ENCODE measurements at regions of chr7 and their contacts with region 1.

Region 1: DNA sequence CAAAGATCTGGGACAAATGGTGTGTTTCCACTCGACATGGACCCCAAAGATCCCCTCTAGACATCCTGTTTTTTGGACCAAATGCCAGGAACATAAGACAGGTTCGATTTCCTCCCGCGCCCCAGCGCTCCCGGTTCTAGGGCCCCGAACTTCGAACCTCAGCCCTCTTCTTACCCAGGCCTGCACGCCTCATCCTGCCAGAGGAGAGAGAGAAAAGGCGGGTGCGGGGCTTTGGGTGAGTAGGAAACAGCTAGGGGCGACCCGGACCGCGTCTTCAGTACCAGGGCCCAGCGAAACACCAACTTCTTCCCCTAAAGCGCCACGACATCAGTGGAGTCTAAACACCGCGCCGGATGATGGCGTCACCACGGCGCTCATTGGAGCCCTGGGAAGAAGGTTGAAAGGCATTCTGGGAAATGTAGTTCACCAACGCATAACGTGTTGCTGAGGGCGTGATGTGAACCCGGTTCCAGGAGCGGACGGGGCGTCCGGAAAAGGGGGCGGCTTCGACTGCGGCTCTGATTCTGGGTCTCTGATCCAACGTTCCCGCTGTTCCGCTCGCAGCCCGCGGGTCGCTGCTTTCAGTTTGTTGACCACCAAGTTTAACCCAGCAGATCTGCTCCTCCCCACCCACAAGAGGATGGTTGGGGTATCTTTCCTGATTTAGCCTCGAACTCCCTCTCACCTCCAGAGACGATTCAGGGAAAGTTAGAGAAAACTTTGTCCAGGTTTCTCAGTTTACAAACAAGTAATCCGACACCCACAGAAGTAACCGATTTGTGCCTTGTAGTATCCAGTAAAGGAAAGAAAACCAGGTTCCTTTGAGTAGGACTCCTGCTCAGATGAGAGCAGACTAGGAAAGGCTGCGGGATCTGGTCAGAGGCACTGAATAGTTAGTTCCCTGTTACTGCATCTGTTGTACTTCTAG is at the start of gene BET1:
- DNase-seq: peak; percentile 84 to 98 (median 90)
- ATAC-seq: peak; percentile 95
- H3K4me3 ChIP-seq: peak within 1 kb of the TSS; percentile 75
- H3K4me3 Mint-ChIP-seq: peak within 1 kb of the TSS; percentile 99
- H3K27ac ChIP-seq: peak within 1 kb of the TSS; percentile 76 to 78
- H3K27ac Mint-ChIP-seq: peak within 1 kb of the TSS; percentile 99
- H3K4me1 ChIP-seq: peaks cover 14% of the 10 kb centered on the region
- H3K4me1 Mint-ChIP-seq: peaks cover 53% of the 10 kb centered on the region
- H3K27me3 ChIP-seq: no peaks in the 10 kb centered on the region
- H3K27me3 Mint-ChIP-seq: peaks cover 18% of the 10 kb centered on the region
- CTCF ChIP-seq: no peak
- total RNA-seq, gene BET1: 7.4 to 9.5 TPM

Region 2: GRCh38 chr7:92456236-92456635 is 1548.1 kb before region 1 on chr7:
- CTCF ChIA-PET with region 1: no interaction called
- POLR2A ChIA-PET with region 1: no interaction called
- intact Hi-C with region 1: loop called in 1 of 2 experiments (anchors 10 kb)
- DNase-seq: no peak
- ATAC-seq: no peak
- H3K4me3 ChIP-seq: no peak overlapping the region
- H3K4me3 Mint-ChIP-seq: no peak overlapping the region
- H3K27ac ChIP-seq: no peak overlapping the region
- H3K27ac Mint-ChIP-seq: no peak overlapping the region
- H3K4me1 ChIP-seq: no peaks in the 10 kb centered on the region
- H3K4me1 Mint-ChIP-seq: no peaks in the 10 kb centered on the region
- H3K27me3 ChIP-seq: no peaks in the 10 kb centered on the region
- H3K27me3 Mint-ChIP-seq: no peaks in the 10 kb centered on the region
- CTCF ChIP-seq: no peak

Region 3: DNA sequence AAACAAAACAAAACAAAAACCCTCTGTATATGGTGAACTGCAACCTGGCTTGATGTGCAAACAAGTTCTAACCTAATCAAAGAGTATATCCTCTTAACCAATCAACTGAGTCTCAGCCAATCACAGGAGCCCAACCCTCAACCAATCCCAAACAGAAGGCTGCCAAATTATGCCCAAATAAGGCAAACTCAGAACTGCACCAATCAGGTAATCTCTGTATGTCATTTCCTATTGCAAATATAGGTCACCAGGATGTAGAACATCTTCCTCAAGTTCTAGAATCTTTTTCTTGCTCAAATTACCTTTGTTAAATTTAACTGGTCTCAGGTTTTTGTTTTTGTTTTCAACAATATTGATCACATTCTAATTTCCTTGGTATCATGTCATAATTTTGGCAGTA is 1419.3 kb before region 1 on chr7:
- CTCF ChIA-PET with region 1: no interaction called
- POLR2A ChIA-PET with region 1: no interaction called
- intact Hi-C with region 1: loop called in 1 of 2 experiments (anchors 5 kb)
- DNase-seq: peak in 4 of 14 experiments; percentile 6 to 50 (median 46)
- ATAC-seq: peak; percentile 33
- H3K4me3 ChIP-seq: no peak overlapping the region
- H3K4me3 Mint-ChIP-seq: peak overlapping the region; percentile 48
- H3K27ac ChIP-seq: no peak overlapping the region
- H3K27ac Mint-ChIP-seq: peak overlapping the region; percentile 70
- H3K4me1 ChIP-seq: peaks cover 26% of the 10 kb centered on the region
- H3K4me1 Mint-ChIP-seq: peaks cover 71% of the 10 kb centered on the region
- H3K27me3 ChIP-seq: no peaks in the 10 kb centered on the region
- H3K27me3 Mint-ChIP-seq: no peaks in the 10 kb centered on the region
- CTCF ChIP-seq: no peak

Region 4: GRCh38 chr7:94509879-94510581 is 505.7 kb after region 1 on chr7:
- CTCF ChIA-PET with region 1: no interaction called
- POLR2A ChIA-PET with region 1: no interaction called
- intact Hi-C with region 1: loop called in 1 of 2 experiments (anchors 5 kb)
- DNase-seq: peak; percentile 43 to 87 (median 60)
- ATAC-seq: peak; percentile 81
- H3K4me3 ChIP-seq: peak overlapping the region; percentile 70
- H3K4me3 Mint-ChIP-seq: peak overlapping the region; percentile 92
- H3K27ac ChIP-seq: peak overlapping the region; percentile 70 to 73
- H3K27ac Mint-ChIP-seq: no peak overlapping the region
- H3K4me1 ChIP-seq: peaks cover 29% of the 10 kb centered on the region
- H3K4me1 Mint-ChIP-seq: peaks cover 49% of the 10 kb centered on the region
- H3K27me3 ChIP-seq: no peaks in the 10 kb centered on the region
- H3K27me3 Mint-ChIP-seq: no peaks in the 10 kb centered on the region
- CTCF ChIP-seq: peak; percentile 13

Region 5: GRCh38 chr7:94657771-94658693 is 653.7 kb after region 1 on chr7:
- CTCF ChIA-PET with region 1: no interaction called
- POLR2A ChIA-PET with region 1: no interaction called
- intact Hi-C with region 1: loop called in 1 of 2 experiments (anchors 10 kb)
- DNase-seq: peak; percentile 91 to 97 (median 94)
- ATAC-seq: peak; percentile 79
- H3K4me3 ChIP-seq: peak overlapping the region; percentile 63
- H3K4me3 Mint-ChIP-seq: peak overlapping the region; percentile 86
- H3K27ac ChIP-seq: no peak overlapping the region
- H3K27ac Mint-ChIP-seq: peak overlapping the region; percentile 63
- H3K4me1 ChIP-seq: peaks cover 29% of the 10 kb centered on the region
- H3K4me1 Mint-ChIP-seq: peaks cover 21% of the 10 kb centered on the region
- H3K27me3 ChIP-seq: peaks cover 15 to 26% of the 10 kb centered on the region in 2 experiments
- H3K27me3 Mint-ChIP-seq: peaks cover 34% of the 10 kb centered on the region
- CTCF ChIP-seq: no peak